Activated CD4-positive, alpha-beta memory T cell treated with anti-CD3 and anti-CD28 coated beads for 36 hours (primary cell): ENCODE measurements at regions of chrX and their contacts with region 1.

Region 1: GRCh38 chrX:17689971-17690409 is 47.3 kb upstream of the SCML1 start:
- DNase-seq: peak; percentile 19
- H3K4me3 Mint-ChIP-seq: no peak overlapping the region
- H3K27ac Mint-ChIP-seq: no peak overlapping the region
- H3K4me1 Mint-ChIP-seq: no peaks in the 10 kb centered on the region
- H3K27me3 Mint-ChIP-seq: no peaks in the 10 kb centered on the region

Region 2: DNA sequence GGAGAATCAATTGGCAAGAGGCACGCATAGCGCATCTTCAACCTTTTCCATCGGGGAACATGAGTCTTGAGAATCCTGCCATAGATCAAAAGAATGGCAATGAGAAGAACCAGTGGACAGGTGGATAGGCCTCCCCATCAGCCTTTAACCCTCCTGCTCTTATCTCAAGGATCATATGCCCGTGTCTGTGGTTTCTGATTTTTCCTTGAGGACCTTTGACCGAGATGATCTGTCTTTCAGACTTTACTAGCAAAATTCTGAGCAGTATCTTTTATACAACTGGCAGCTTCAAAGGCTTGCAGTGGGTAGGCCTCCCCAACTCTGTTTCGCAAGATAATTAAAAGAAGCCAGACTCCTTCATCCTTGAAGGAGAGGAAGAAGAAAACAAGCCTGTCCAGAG is 569.2 kb before region 1 on chrX:
- CTCF ChIA-PET with region 1: no interaction called
- POLR2A ChIA-PET with region 1: no interaction called
- intact Hi-C with region 1: loop called (anchors 5 kb)
- DNase-seq: no peak
- H3K4me3 Mint-ChIP-seq: no peak overlapping the region
- H3K27ac Mint-ChIP-seq: no peak overlapping the region
- H3K4me1 Mint-ChIP-seq: no peaks in the 10 kb centered on the region
- H3K27me3 Mint-ChIP-seq: no peaks in the 10 kb centered on the region

Region 3: GRCh38 chrX:17242470-17242869 is 447.5 kb before region 1 on chrX:
- CTCF ChIA-PET with region 1: interaction called, 23 read pairs
- POLR2A ChIA-PET with region 1: no interaction called
- intact Hi-C with region 1: no loop called
- DNase-seq: peak; percentile 23
- H3K4me3 Mint-ChIP-seq: no peak overlapping the region
- H3K27ac Mint-ChIP-seq: no peak overlapping the region
- H3K4me1 Mint-ChIP-seq: no peaks in the 10 kb centered on the region
- H3K27me3 Mint-ChIP-seq: no peaks in the 10 kb centered on the region

Region 4: DNA sequence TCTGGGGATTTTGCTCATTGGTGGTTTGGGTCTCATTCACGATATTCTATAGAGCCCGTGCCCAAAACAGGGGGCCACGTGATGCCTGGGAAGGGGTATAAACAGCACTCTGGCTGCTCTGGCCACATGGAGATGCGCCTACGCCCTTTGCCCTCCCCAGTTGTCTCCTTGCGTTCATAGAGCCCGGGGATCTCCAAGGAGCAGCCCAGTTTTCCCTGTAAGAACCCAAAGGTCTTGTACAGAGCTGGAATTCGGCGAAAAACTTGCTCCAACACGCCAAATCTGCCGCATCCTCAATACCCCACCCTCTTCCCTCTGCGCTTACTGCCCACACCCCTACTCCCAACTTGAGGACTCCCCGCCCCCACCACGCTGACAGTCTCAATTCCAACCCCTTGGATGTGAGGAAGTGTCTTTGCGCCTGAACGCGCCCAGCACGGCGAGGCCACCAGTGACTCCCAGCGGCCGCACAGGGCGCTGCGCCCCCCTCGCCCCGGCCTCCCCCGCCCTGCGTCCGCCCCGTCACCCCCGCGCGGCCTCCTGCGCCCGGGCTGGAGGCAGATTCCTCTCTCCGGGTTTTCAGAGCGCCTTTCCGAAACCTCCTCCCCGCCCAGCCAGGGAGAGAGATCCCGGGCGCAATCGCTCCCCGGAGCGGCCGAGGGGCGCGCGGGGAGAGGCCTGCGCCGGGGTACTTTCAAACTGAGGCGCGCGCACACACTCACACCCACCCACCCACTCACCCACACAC is 315.2 kb before region 1 on chrX and contains the start of gene NHS:
- CTCF ChIA-PET with region 1: no interaction called
- POLR2A ChIA-PET with region 1: no interaction called
- intact Hi-C with region 1: loop called (anchors 10 kb)
- DNase-seq: peak; percentile 31
- H3K4me3 Mint-ChIP-seq: no peak within 1 kb of the TSS
- H3K27ac Mint-ChIP-seq: no peak within 1 kb of the TSS
- H3K4me1 Mint-ChIP-seq: peaks cover 9% of the 10 kb centered on the region
- H3K27me3 Mint-ChIP-seq: peaks cover 22% of the 10 kb centered on the region
- total RNA-seq, gene NHS: 4.8 to 5.0 TPM

Region 5: GRCh38 chrX:17535229-17535628 is 154.8 kb before region 1 on chrX:
- CTCF ChIA-PET with region 1: interaction called, 6 read pairs
- POLR2A ChIA-PET with region 1: no interaction called
- intact Hi-C with region 1: loop called (anchors 1 kb)
- DNase-seq: peak; percentile 69
- H3K4me3 Mint-ChIP-seq: no peak overlapping the region
- H3K27ac Mint-ChIP-seq: no peak overlapping the region
- H3K4me1 Mint-ChIP-seq: peaks cover 17% of the 10 kb centered on the region
- H3K27me3 Mint-ChIP-seq: no peaks in the 10 kb centered on the region

Region 6: GRCh38 chrX:17590892-17591740 is 98.9 kb before region 1 on chrX:
- CTCF ChIA-PET with region 1: interaction called, 3 read pairs
- POLR2A ChIA-PET with region 1: no interaction called
- intact Hi-C with region 1: loop called (anchors 1 kb)
- DNase-seq: peak; percentile 62
- H3K4me3 Mint-ChIP-seq: no peak overlapping the region
- H3K27ac Mint-ChIP-seq: peak overlapping the region; percentile 74
- H3K4me1 Mint-ChIP-seq: peaks cover 20% of the 10 kb centered on the region
- H3K27me3 Mint-ChIP-seq: peaks cover 4% of the 10 kb centered on the region

Region 7: GRCh38 chrX:17655211-17656034 is 34.6 kb before region 1 on chrX:
- CTCF ChIA-PET with region 1: no interaction called
- POLR2A ChIA-PET with region 1: no interaction called
- intact Hi-C with region 1: loop called (anchors 2 kb)
- DNase-seq: peak; percentile 35
- H3K4me3 Mint-ChIP-seq: peak overlapping the region; percentile 85
- H3K27ac Mint-ChIP-seq: peak overlapping the region; percentile 81
- H3K4me1 Mint-ChIP-seq: peaks cover 29% of the 10 kb centered on the region
- H3K27me3 Mint-ChIP-seq: no peaks in the 10 kb centered on the region

Region 8: DNA sequence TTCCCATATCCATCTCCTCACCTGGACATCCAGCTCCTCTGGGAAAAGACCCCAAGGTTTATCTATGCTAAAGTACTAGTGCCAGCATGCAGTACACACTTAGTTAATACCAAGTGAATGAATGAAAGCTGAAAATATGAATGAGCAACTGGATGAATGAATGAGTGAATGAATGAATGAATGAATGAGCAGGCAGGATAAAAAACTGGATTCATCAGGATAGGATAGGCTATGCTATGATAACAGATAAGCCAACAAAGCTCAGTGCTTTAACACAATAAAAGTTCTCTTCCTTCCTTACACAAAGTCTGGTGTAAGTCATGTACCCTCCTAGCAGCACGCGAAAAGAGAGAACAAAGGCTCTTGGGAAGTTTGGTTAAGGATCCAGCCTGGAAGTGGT is 23.5 kb before region 1 on chrX:
- CTCF ChIA-PET with region 1: no interaction called
- POLR2A ChIA-PET with region 1: no interaction called
- intact Hi-C with region 1: no loop called
- DNase-seq: no peak
- H3K4me3 Mint-ChIP-seq: no peak overlapping the region
- H3K27ac Mint-ChIP-seq: no peak overlapping the region
- H3K4me1 Mint-ChIP-seq: peaks cover 16% of the 10 kb centered on the region
- H3K27me3 Mint-ChIP-seq: no peaks in the 10 kb centered on the region

Region 9: DNA sequence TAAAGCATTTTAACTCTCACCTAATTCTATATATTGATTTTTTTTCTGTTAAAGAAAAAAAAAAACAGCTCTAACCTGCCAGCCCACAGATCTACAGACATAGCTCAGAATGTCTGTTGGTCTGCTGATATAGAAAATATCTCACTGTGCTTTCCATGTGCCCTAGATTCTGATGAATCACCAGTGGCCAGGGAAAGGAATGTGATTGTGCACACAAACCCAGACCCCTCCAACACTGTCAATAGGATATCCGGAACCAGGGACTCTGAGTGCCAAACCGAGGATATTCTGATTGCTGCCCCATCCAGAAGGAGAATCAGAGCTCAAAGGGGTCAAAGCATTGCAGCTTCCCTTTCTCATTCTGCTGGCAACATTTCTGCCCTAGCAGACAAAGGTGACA is 35.2 kb after region 1 on chrX:
- CTCF ChIA-PET with region 1: no interaction called
- POLR2A ChIA-PET with region 1: no interaction called
- intact Hi-C with region 1: no loop called
- DNase-seq: no peak
- H3K4me3 Mint-ChIP-seq: no peak overlapping the region
- H3K27ac Mint-ChIP-seq: no peak overlapping the region
- H3K4me1 Mint-ChIP-seq: no peaks in the 10 kb centered on the region
- H3K27me3 Mint-ChIP-seq: no peaks in the 10 kb centered on the region